ENCODE measurements at regions of chr12 and their contacts with region 1.

Region 1: GRCh38 chr12:85155787-85156186 is 119.6 kb downstream of the LRRIQ1 start:
- DNase-seq: peak; percentile 29
- H3K4me3 ChIP-seq: no peak overlapping the region
- CTCF ChIP-seq: no peak

Region 2: GRCh38 chr12:85424581-85425348 is 269.0 kb after region 1 on chr12:
- in situ Hi-C with region 1: loop called (anchors 25 kb)
- DNase-seq: peak; percentile 11
- H3K4me3 ChIP-seq: no peak overlapping the region
- CTCF ChIP-seq: peak; percentile 46